A549 (cell line): ENCODE measurements at regions of chr5 and their contacts with region 1.

Region 1: GRCh38 chr5:172697123-172698121 is 56.4 kb downstream of the NEURL1B start:
- DNase-seq: peak; percentile 80 to 84
- ATAC-seq: peak; percentile 83 to 90
- H3K4me3 ChIP-seq: peak overlapping the region; percentile 43
- H3K27ac ChIP-seq: peak overlapping the region; percentile 67 to 81
- H3K4me1 ChIP-seq: peaks cover 8% of the 10 kb centered on the region; the same call in 2 of the 3 replicates
- CTCF ChIP-seq: peak; percentile 92
- EP300 ChIP-seq: no peak
- POLR2A ChIP-seq: no peak
- RAD21 ChIP-seq: peak; percentile 98 to 99

Region 2: GRCh38 chr5:172458976-172459782 is 238.2 kb before region 1 on chr5:
- CTCF ChIA-PET with region 1: interaction called, 39 read pairs
- POLR2A ChIA-PET with region 1: no interaction called
- DNase-seq: no peak
- ATAC-seq: no peak
- H3K4me3 ChIP-seq: no peak overlapping the region
- H3K27ac ChIP-seq: no peak overlapping the region
- H3K4me1 ChIP-seq: peaks cover 7% of the 10 kb centered on the region
- CTCF ChIP-seq: no peak
- EP300 ChIP-seq: no peak
- POLR2A ChIP-seq: no peak
- RAD21 ChIP-seq: no peak

Region 3: GRCh38 chr5:172479044-172479783 is 218.2 kb before region 1 on chr5:
- CTCF ChIA-PET with region 1: interaction called, 198 read pairs
- POLR2A ChIA-PET with region 1: no interaction called
- DNase-seq: peak; percentile 92
- ATAC-seq: peak; percentile 94 to 99
- H3K4me3 ChIP-seq: no peak overlapping the region
- H3K27ac ChIP-seq: no peak overlapping the region; a peak in 1 of 6 replicates
- H3K4me1 ChIP-seq: no peaks in the 10 kb centered on the region
- CTCF ChIP-seq: peak; percentile 96
- EP300 ChIP-seq: no peak
- POLR2A ChIP-seq: no peak
- RAD21 ChIP-seq: peak; percentile 96 to 97

Region 4: DNA sequence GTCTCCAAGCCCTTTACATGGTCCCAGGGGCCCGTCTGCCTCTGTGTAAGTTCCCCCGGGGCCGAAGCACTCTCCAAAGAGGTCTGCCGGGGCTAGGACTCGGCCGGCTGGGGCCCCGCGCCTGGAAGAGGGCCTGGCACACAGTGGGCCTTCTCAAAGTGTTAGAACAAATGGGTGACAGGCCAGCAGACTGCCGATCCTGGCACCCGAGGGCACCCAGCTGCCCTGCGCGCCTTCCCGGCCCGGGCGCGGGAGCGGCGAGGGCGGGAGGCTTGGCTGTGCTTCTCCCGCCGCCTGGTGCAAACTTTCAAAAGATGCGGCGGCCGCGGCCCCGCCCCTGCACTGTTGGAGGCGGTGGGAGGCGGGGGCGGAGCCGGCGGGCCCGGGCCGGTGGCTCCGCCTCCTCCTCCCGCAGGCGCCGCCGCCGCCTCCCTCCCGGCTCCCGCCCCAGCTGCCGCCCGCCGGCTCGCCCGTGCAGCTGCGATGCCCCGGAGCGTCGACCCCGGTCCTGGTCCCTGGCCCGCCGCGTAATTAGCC is 56.5 kb before region 1 on chr5 and contains the start of gene NEURL1B:
- CTCF ChIA-PET with region 1: interaction called, 20 read pairs
- POLR2A ChIA-PET with region 1: no interaction called
- DNase-seq: peak; percentile 61 to 86
- ATAC-seq: peak; percentile 74 to 86
- H3K4me3 ChIP-seq: peak within 1 kb of the TSS; percentile 81
- H3K27ac ChIP-seq: peak within 1 kb of the TSS; percentile 70 to 83
- H3K4me1 ChIP-seq: peaks cover 11% of the 10 kb centered on the region
- CTCF ChIP-seq: no peak
- EP300 ChIP-seq: no peak
- POLR2A ChIP-seq: no peak
- RAD21 ChIP-seq: no peak
- polyA plus RNA-seq, gene NEURL1B: 0.89 and 1.3 TPM in 2 replicates

Region 5: DNA sequence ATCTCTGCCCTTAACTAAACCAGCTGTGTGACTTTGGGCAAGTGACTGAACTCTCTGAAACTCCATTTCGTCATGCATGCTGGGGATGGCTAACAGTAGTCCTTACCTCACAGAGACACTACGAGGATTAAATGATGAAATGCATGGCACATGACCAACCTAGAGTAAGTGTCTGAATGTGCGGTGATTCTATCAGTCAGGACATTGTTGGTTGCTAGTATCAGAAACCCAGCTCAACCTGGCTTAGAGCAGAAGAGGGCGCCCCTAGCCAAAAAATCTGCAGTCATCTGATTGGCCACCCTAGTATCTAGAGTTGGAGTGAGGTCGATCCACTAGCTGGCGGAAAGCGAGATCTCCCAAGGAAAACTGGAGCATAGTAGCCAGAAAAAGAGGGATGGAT is 31.2 kb before region 1 on chr5:
- CTCF ChIA-PET with region 1: interaction called, 22 read pairs
- POLR2A ChIA-PET with region 1: no interaction called
- DNase-seq: peak in 1 of 2 experiments; percentile 36
- ATAC-seq: peak; percentile 19 to 71; a peak in 3 of 6 replicates
- H3K4me3 ChIP-seq: no peak overlapping the region
- H3K27ac ChIP-seq: no peak overlapping the region
- H3K4me1 ChIP-seq: no peaks in the 10 kb centered on the region
- CTCF ChIP-seq: no peak
- EP300 ChIP-seq: no peak
- POLR2A ChIP-seq: no peak
- RAD21 ChIP-seq: peak; percentile 24 to 39; a peak in 3 of 5 replicates